Spleen (tissue), 13 donors: ENCODE measurements at regions of chr11 and their contacts with region 1.

Region 1: DNA sequence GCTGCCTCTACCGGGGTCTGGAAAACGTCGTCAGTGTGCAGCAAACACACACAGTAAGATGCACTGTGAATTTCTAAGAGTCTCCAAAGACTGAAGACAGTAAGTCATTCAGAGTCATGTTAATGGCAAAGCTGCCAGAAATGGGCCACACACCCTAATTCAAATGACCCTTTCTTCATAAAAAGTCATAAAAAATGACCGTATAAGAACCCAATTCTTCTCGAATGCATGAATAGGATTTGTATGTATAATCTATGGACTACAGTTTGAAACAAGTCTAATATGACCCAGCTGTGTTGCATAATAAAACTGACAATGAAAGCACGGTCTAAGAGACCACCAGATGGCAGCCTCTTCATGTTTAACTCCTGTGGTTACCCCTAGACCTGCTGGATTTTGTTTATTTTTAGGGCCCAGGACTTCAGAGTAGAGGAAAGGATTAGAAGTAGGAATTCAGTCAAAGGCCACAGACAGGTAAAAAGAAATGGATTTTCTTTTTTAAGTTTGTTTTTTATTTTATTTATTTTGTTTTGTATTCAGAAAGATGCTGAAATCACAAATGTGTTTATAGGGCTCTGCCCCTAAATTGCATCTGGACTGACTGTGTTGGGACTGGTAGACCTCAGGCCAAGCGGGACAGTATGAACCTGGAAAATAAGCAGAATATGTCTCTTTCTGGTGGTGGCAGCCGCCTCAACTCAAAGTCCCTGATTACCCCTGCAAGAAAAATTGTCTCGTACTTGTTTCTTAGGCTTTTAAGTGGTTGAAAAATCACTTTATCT is 32.1 kb upstream of the SLC5A12 start:
- DNase-seq: no peak
- H3K4me3 ChIP-seq: no peak overlapping the region
- H3K27ac ChIP-seq: no peak overlapping the region
- H3K4me1 ChIP-seq: no peaks in the 10 kb centered on the region
- H3K27me3 ChIP-seq: no peaks in the 10 kb centered on the region
- CTCF ChIP-seq: peak in 9 of 11 experiments; percentile 19 to 61 (median 53)
- POLR2A ChIP-seq: no peak

Region 2: GRCh38 chr11:26063915-26064314 is 690.0 kb before region 1 on chr11:
- intact Hi-C with region 1: no loop called
- DNase-seq: no peak
- H3K4me3 ChIP-seq: no peak overlapping the region
- H3K27ac ChIP-seq: no peak overlapping the region
- H3K4me1 ChIP-seq: no peaks in the 10 kb centered on the region
- H3K27me3 ChIP-seq: no peaks in the 10 kb centered on the region
- CTCF ChIP-seq: no peak
- POLR2A ChIP-seq: no peak

Region 3: DNA sequence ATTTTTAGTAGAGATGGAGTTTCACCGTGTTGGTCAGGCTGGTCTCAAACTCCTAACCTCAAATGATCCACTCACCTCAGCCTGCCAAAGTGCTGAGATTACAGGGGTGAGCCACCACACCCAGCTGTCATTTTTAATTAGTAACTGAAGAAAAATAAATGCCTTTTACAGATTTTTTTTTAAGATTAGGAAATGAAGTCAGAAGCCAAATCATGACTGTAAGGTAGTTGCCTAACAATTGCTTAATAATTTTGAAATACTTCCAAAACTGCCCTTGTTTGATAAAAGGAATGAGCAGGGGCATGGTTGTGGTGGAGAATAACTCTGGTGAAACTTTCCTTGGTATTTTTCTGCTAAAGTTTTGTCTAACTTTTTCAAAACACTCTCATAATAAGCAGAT is 66.8 kb after region 1 on chr11:
- intact Hi-C with region 1: no loop called
- DNase-seq: no peak
- H3K4me3 ChIP-seq: no peak overlapping the region
- H3K27ac ChIP-seq: no peak overlapping the region
- H3K4me1 ChIP-seq: no peaks in the 10 kb centered on the region
- H3K27me3 ChIP-seq: no peaks in the 10 kb centered on the region
- CTCF ChIP-seq: no peak
- POLR2A ChIP-seq: no peak

Region 4: DNA sequence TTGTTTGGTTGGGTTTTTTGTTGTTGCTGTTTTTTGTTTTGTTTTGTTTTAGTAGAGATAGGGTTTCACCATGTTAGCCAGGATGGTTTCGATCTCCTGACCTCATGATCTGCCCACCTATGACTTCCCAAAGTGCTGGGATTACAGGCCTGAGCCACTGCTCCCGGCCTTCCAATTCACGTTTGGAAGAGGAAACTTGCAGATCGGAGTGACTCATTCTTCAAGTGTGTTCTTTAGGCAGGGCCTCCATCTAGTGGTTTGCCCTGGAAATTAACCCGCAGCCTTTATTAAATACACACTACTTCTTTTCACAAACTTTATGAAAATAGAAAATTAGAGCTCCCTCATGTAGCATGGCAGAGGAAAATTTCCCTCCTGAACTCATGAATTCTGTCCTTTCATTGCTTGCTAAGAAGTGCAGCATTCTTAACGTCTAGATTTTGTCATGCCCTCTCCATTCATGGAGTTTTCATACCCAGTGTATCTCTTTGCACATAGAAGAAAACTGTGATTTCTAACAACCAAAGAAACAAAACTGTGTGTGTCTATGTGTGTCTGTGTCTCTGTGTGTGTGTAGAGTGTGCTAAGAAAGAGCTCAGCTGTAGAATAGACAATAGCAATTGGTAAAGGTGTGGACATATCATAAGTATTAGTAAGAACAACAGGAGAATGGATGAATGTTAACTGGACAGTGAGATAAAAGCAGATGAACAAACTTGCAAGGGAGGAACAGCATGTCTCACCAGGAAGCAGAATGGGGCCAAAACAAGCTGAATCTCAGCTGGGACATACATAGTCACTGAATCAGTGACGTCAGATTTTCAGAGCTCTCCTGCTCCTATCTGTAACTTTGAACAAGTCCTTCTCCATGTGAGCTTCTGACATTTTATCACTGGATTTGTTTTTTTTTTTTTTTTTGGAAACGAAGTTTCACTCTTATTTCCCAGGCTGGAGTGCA is 405.1 kb after region 1 on chr11:
- intact Hi-C with region 1: loop called (anchors 5 kb)
- DNase-seq: no peak
- H3K4me3 ChIP-seq: no peak overlapping the region
- H3K27ac ChIP-seq: no peak overlapping the region
- H3K4me1 ChIP-seq: no peaks in the 10 kb centered on the region
- H3K27me3 ChIP-seq: peaks cover 0 to 5% (median 0%) of the 10 kb centered on the region in 7 donors
- CTCF ChIP-seq: peak in 9 of 11 experiments; percentile 13 to 71 (median 50)
- POLR2A ChIP-seq: no peak